ENCODE measurements at regions of chr1 and their contacts with region 1.

Region 1: GRCh38 chr1:18926315-18927081 is 24.1 kb upstream of the ALDH4A1 start:
- DNase-seq: peak; percentile 95
- H3K4me3 Mint-ChIP-seq: peak overlapping the region; percentile 80
- H3K27ac Mint-ChIP-seq: peak overlapping the region; percentile 99
- H3K4me1 Mint-ChIP-seq: peaks cover 74% of the 10 kb centered on the region
- H3K27me3 Mint-ChIP-seq: no peaks in the 10 kb centered on the region

Region 2: GRCh38 chr1:18956369-18957135 is 30.1 kb after region 1 on chr1 and contains the start of gene IFFO2:
- CTCF ChIA-PET with region 1: interaction called, 28 read pairs
- intact Hi-C with region 1: loop called (anchors 1 kb)
- DNase-seq: peak; percentile 98
- H3K4me3 Mint-ChIP-seq: peak within 1 kb of the TSS; percentile 91
- H3K27ac Mint-ChIP-seq: peak within 1 kb of the TSS; percentile 47
- H3K4me1 Mint-ChIP-seq: peaks cover 48% of the 10 kb centered on the region
- H3K27me3 Mint-ChIP-seq: no peaks in the 10 kb centered on the region
- total RNA-seq, gene IFFO2: 24.9 to 27.0 TPM

Region 3: DNA sequence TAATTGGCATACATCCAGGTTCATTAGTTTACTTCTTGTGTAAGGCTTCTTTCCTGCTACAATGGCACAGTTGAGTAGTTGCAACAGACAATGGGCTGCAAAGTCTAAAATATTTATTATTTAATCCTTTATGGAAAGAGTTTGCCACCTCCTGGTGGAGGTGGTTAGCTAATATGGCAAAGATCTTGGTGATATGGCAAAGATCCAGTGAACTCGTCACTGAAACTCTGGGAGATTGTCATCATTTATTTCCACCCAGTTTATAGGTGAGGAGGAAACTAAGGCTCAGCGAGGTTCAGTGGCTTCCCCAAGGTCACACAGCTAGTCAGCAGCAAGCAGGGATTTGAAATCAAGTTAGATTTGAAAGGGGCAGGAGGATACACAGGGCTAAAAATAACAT is 46.0 kb after region 1 on chr1:
- CTCF ChIA-PET with region 1: interaction called, 5 read pairs
- intact Hi-C with region 1: loop called (anchors 2 kb)
- DNase-seq: no peak
- H3K4me3 Mint-ChIP-seq: no peak overlapping the region
- H3K27ac Mint-ChIP-seq: no peak overlapping the region
- H3K4me1 Mint-ChIP-seq: peaks cover 3% of the 10 kb centered on the region
- H3K27me3 Mint-ChIP-seq: no peaks in the 10 kb centered on the region

Region 4: DNA sequence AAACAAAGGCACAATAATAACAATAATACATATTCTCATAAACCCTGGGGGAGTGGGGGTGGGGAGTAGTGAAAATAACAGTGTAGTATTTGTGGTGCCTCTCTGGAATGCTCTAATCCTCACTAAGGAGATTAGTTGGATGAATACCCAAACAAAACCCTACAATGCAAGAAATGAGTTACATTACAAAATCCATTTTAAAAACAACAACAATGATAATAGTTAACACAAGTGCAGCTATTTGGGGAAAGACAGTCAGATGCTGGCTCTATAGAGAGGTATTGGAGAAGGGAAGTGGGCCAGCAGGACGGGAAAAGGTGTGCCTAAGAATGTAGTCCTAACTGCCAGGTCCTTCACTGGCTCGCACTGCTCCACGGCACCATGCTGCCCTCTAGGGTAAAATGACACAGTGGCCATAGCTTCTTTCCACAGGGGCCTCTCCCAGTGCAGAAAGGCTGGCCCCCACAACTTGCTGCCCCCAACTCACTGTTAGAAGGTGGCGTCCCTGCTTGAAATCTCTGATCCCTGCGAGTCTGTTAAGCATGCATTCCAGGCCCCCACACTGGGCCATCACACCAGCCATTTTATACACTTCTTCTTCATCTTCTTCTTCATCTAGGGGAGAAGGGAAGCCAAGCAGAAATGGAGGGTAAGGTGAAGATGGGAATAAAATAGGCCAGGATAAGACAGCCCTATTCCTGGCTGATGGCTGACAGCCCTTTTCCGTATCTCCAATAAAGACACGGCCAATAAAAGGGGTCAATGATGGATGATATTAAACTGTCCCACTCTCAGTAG is 169.7 kb after region 1 on chr1:
- CTCF ChIA-PET with region 1: no interaction called
- intact Hi-C with region 1: loop called (anchors 5 kb)
- DNase-seq: peak; percentile 35
- H3K4me3 Mint-ChIP-seq: no peak overlapping the region
- H3K27ac Mint-ChIP-seq: no peak overlapping the region
- H3K4me1 Mint-ChIP-seq: no peaks in the 10 kb centered on the region
- H3K27me3 Mint-ChIP-seq: no peaks in the 10 kb centered on the region